ENCODE measurements at regions of chr11 and their contacts with region 1.

Region 1: DNA sequence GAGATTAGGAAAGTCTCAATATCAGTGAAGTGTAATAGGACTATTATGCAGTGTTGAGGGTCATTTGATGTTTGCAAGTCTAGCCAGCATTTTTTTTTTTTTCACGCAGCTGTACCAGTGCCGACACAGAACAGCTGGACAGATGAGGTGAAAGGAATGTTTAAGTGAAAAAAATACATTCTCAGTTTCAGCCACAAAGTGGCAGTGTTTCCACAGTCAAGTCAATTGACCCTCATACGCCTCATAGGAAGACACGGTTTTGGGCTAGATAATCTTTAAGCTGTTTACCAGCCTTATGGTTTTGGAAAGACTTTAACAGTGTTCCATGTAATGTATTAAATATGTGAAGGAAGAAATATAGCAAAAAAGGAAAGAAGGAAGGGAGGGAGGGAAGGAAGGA is 349.9 kb upstream of the ANO3 start:
- DNase-seq: peak in 1 of 2 donors; percentile 85
- H3K4me3 ChIP-seq: no peak overlapping the region
- H3K27ac ChIP-seq: no peak overlapping the region
- H3K4me1 ChIP-seq: no peaks in the 10 kb centered on the region
- H3K27me3 ChIP-seq: no peaks in the 10 kb centered on the region
- CTCF ChIP-seq: peak in 4 of 7 experiments; percentile 18 to 59 (median 43)
- EP300 ChIP-seq: no peak
- POLR2A ChIP-seq: no peak

Region 2: DNA sequence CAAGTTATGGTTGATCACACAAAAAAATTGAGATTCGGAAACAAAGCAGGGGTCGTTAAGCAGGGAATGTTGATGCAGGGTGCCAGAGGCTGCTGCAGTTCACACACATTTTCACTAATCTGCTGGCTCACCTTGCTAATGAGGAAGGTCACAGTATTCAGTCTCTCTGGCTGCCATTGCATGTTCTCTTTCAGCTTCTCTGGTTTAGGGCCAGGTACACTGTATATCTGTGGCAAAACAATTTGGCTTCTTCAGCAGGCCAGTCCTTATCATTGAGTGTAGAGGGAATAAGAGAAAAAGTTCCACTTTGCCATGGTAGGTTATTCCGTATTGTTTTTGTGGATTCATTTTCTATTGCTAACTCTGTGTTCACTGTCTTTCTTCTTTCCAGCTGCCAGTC is 66.3 kb after region 1 on chr11:
- intact Hi-C with region 1: no loop called
- DNase-seq: no peak
- H3K4me3 ChIP-seq: no peak overlapping the region
- H3K27ac ChIP-seq: no peak overlapping the region
- H3K4me1 ChIP-seq: no peaks in the 10 kb centered on the region
- H3K27me3 ChIP-seq: no peaks in the 10 kb centered on the region
- CTCF ChIP-seq: no peak
- EP300 ChIP-seq: no peak
- POLR2A ChIP-seq: no peak

Region 3: DNA sequence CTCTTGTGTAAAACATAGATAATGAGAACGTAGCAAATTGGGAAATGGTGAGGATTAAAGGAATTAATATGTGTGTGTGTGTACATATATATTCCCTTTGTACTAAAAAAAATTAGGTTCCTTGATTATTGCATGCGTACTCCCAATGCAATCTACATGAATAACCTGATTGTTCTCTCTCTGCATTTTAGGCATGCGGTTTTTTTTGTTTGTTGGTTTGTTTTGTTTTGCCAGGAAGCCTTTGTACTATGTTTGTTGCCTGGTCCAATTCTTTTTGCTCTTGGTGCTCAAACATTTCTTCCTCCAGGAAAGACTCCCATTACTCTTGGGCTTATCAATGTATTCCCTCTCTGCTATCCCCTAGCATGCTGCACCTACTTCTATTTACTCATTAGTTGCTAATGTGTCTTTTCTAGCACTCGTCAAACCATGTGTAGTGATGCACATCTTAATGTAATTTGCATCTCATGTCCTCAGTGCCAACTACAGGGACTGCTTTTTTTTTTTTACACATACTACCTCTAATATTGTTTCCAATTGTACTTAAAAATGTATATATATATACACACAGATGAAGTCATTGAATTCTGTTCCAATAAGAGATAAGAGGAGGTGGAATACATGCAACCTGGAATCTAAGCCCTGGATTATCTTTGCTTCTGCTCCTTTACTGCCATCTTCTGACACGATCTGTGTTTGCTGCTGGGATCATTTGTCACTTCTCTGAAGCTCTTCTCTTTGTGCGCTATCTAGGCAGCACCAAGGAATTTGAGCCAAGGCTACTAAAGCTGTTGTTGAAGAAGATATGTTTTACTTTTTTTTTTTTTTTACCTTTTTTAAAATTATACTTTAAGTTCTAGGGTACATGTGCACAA is 152.7 kb after region 1 on chr11:
- intact Hi-C with region 1: no loop called
- DNase-seq: peak in 1 of 2 donors; percentile 41
- H3K4me3 ChIP-seq: no peak overlapping the region
- H3K27ac ChIP-seq: no peak overlapping the region
- H3K4me1 ChIP-seq: no peaks in the 10 kb centered on the region
- H3K27me3 ChIP-seq: no peaks in the 10 kb centered on the region
- CTCF ChIP-seq: no peak
- EP300 ChIP-seq: no peak
- POLR2A ChIP-seq: no peak

Region 4: DNA sequence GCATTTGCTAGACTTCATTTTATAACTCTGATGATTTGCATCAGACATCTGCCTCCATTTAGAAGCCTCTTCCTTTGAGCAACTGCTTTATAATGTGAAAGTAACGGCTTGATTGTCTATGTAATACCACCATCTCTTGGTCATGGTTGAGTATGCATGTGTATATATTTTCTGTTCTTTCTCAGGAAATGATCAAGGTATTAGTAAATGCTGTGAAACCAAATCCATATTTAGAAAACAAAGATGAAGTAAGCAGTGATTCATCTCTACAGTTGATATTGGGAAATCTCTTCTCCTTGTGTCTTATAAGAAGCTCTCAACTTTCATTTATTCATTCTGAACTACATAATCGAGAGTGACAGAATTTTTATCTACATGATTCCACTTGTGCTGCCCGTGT is 245.3 kb after region 1 on chr11:
- intact Hi-C with region 1: loop called (anchors 10 kb)
- DNase-seq: peak in 1 of 2 donors; percentile 62
- H3K4me3 ChIP-seq: no peak overlapping the region
- H3K27ac ChIP-seq: no peak overlapping the region
- H3K4me1 ChIP-seq: no peaks in the 10 kb centered on the region
- H3K27me3 ChIP-seq: no peaks in the 10 kb centered on the region
- CTCF ChIP-seq: peak in 3 of 7 experiments; percentile 17 to 39 (median 19)
- EP300 ChIP-seq: no peak
- POLR2A ChIP-seq: no peak